CD4-positive, alpha-beta memory T cell (primary cell): ENCODE measurements at regions of chr19 and their contacts with region 1.

Region 1: DNA sequence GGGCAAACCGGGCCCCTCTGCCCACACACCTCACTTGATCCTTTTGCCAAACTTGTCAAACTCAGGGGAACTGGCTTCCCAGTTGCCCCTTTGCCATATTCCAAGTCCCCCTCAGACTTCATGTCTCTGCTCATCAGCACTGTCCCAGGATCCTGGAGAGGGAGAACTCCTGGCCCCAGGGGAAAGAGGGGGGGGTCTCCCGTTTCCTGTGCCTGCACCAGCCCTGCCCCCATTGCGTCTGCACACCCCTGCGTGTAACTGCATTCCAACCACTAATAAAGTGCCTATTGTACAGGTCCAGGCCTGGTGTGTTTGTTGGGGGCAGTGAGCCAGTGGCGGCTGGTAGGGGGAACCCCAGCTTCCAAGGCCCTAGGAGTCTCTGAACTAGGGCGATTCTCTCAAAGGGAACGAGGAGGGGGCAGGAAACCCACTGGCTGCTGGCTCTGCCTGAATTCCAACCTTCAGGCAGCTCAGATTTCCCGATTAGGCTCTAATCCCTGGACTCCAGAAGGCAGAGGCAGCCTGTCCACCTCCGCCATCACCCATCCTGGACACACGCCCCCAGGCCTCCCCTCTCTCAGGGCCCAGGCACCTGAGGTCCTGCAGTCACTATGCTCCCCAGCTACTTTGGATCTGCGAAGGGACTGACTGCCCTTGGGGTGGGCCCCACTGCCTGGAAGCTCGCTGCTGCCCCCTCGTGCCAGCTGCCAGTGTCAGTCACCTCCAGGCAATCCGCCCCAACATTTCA is 9.7 kb upstream of the ILF3 start:
- DNase-seq: peak; percentile 78 to 81 (median 80)
- H3K4me3 ChIP-seq: no peak overlapping the region
- H3K4me3 Mint-ChIP-seq: no peak overlapping the region
- H3K27ac ChIP-seq: peak overlapping the region; percentile 37
- H3K27ac Mint-ChIP-seq: peak overlapping the region; percentile 31 to 88 (median 75)
- H3K4me1 ChIP-seq: peaks cover 5% of the 10 kb centered on the region
- H3K4me1 Mint-ChIP-seq: peaks cover 7 to 28% (median 12%) of the 10 kb centered on the region in 4 donors
- H3K27me3 ChIP-seq: no peaks in the 10 kb centered on the region
- H3K27me3 Mint-ChIP-seq: no peaks in the 10 kb centered on the region

Region 2: GRCh38 chr19:10502524-10503001 is 141.9 kb before region 1 on chr19:
- CTCF ChIA-PET with region 1: interaction called, 4 read pairs
- POLR2A ChIA-PET with region 1: no interaction called
- intact Hi-C with region 1: loop called (anchors 1 kb)
- DNase-seq: peak; percentile 83 to 88 (median 87)
- H3K4me3 ChIP-seq: peak overlapping the region; percentile 50 to 97
- H3K4me3 Mint-ChIP-seq: peak overlapping the region; percentile 84 to 90 (median 88)
- H3K27ac ChIP-seq: peak overlapping the region; percentile 87
- H3K27ac Mint-ChIP-seq: peak overlapping the region; percentile 81 to 94 (median 90)
- H3K4me1 ChIP-seq: peaks cover 47% of the 10 kb centered on the region
- H3K4me1 Mint-ChIP-seq: peaks cover 21 to 49% (median 35%) of the 10 kb centered on the region in 4 donors
- H3K27me3 ChIP-seq: no peaks in the 10 kb centered on the region
- H3K27me3 Mint-ChIP-seq: no peaks in the 10 kb centered on the region

Region 3: DNA sequence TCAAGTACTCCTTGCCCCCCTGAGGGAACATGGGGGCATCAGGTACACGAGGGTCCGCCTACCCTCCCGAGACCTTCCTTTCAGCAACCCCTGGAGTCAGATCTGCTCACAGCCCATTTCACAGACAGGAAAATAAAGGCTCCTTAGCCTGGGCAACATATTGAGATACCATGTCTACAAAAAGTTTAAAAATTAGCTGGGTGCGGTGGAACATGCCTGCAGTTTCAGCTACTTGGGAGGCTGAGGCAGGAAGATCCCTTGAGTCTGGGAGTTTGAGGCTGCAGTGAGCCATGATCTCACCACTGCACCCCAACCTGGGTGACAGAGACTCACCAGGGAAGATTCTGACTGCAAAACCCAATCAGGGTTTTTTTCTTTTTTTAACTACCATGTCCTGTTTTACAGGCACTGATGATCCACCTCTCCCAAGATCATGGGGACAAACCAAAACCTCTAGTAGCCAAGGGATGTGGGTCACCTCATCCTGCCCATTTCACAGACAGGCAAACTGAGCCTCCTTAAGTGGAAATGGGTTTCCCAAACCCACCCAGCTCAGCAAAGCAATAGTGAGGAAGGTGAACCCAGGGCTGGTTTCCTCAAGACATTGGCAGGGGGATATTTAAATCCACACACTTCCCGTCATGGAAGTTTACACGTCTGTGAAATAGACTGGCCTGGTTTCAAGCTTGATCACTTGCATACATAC is 69.3 kb before region 1 on chr19:
- CTCF ChIA-PET with region 1: interaction called, 473 read pairs
- POLR2A ChIA-PET with region 1: interaction called, 46 read pairs
- intact Hi-C with region 1: no loop called
- DNase-seq: no peak
- H3K4me3 ChIP-seq: no peak overlapping the region
- H3K4me3 Mint-ChIP-seq: no peak overlapping the region
- H3K27ac ChIP-seq: no peak overlapping the region
- H3K27ac Mint-ChIP-seq: peak overlapping the region in 3 of 7 donors; percentile 13 to 70 (median 50)
- H3K4me1 ChIP-seq: peaks cover 7% of the 10 kb centered on the region
- H3K4me1 Mint-ChIP-seq: peaks cover 4 to 7% (median 7%) of the 10 kb centered on the region in 4 donors
- H3K27me3 ChIP-seq: no peaks in the 10 kb centered on the region
- H3K27me3 Mint-ChIP-seq: no peaks in the 10 kb centered on the region

Region 4: DNA sequence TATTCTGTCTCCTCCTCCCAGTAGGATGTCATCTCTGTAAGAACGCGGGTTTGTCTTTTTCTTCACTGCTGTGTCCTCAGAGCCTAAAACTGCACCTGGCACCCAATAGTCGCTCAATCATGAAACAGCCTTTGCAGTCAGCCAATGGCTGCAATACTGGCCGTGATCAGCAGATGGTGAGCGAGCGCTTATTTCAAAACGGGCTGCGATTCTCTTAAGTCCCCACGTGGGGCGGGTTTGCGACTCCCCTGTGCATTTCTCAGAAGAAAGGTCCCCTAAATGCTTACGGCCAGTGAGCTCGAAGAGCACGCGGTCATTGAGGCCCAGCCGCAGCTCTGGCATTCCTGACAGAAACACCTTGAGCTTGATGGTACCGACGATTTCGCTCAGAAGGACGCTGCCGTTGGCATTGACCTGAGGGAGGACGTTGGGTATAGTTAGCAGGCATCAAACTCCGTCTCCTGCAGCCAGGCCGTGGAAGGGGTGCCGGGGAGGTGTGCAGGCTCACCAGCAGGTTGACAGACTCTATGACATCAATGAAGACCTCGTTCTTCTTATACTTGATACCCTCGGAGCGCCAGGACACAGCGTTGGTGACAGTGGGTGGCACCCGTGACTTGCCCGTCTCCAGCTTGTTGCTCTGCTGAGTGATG is 63.3 kb before region 1 on chr19:
- CTCF ChIA-PET with region 1: interaction called, 473 read pairs
- POLR2A ChIA-PET with region 1: interaction called, 46 read pairs
- intact Hi-C with region 1: loop called (anchors 1 kb)
- DNase-seq: peak; percentile 84 to 88 (median 84)
- H3K4me3 ChIP-seq: no peak overlapping the region
- H3K4me3 Mint-ChIP-seq: peak overlapping the region in 4 of 8 donors; percentile 0 to 65 (median 30)
- H3K27ac ChIP-seq: no peak overlapping the region
- H3K27ac Mint-ChIP-seq: peak overlapping the region in 3 of 7 donors; percentile 4 to 26 (median 25)
- H3K4me1 ChIP-seq: peaks cover 22% of the 10 kb centered on the region
- H3K4me1 Mint-ChIP-seq: peaks cover 9 to 24% (median 16%) of the 10 kb centered on the region in 4 donors
- H3K27me3 ChIP-seq: no peaks in the 10 kb centered on the region
- H3K27me3 Mint-ChIP-seq: peaks cover 2% of the 10 kb centered on the region in 2 donors

Region 5: GRCh38 chr19:10602330-10603083 is 41.9 kb before region 1 on chr19:
- CTCF ChIA-PET with region 1: interaction called, 53 read pairs
- POLR2A ChIA-PET with region 1: interaction called, 51 read pairs
- intact Hi-C with region 1: loop called (anchors 1 kb)
- DNase-seq: peak; percentile 82 to 84 (median 84)
- H3K4me3 ChIP-seq: peak overlapping the region; percentile 85 to 94
- H3K4me3 Mint-ChIP-seq: peak overlapping the region; percentile 98 to 99 (median 99)
- H3K27ac ChIP-seq: peak overlapping the region; percentile 96
- H3K27ac Mint-ChIP-seq: peak overlapping the region; percentile 99 to 100 (median 100)
- H3K4me1 ChIP-seq: peaks cover 29% of the 10 kb centered on the region
- H3K4me1 Mint-ChIP-seq: peaks cover 17 to 34% (median 21%) of the 10 kb centered on the region in 4 donors
- H3K27me3 ChIP-seq: no peaks in the 10 kb centered on the region
- H3K27me3 Mint-ChIP-seq: no peaks in the 10 kb centered on the region

Region 6: GRCh38 chr19:10612491-10613119 is 31.8 kb before region 1 on chr19:
- CTCF ChIA-PET with region 1: interaction called, 11 read pairs
- POLR2A ChIA-PET with region 1: interaction called, 3 read pairs
- intact Hi-C with region 1: no loop called
- DNase-seq: no peak
- H3K4me3 ChIP-seq: no peak overlapping the region
- H3K4me3 Mint-ChIP-seq: peak overlapping the region in 1 of 8 donors; percentile 45
- H3K27ac ChIP-seq: no peak overlapping the region
- H3K27ac Mint-ChIP-seq: peak overlapping the region in 4 of 7 donors; percentile 29 to 77 (median 43)
- H3K4me1 ChIP-seq: peaks cover 35% of the 10 kb centered on the region
- H3K4me1 Mint-ChIP-seq: peaks cover 8 to 40% (median 27%) of the 10 kb centered on the region in 4 donors
- H3K27me3 ChIP-seq: no peaks in the 10 kb centered on the region
- H3K27me3 Mint-ChIP-seq: no peaks in the 10 kb centered on the region

Region 7: GRCh38 chr19:10625003-10625776 is 19.2 kb before region 1 on chr19 and contains the start of gene SLC44A2:
- CTCF ChIA-PET with region 1: interaction called, 11 read pairs
- POLR2A ChIA-PET with region 1: interaction called, 3 read pairs
- intact Hi-C with region 1: no loop called
- DNase-seq: no peak
- H3K4me3 ChIP-seq: no peak within 1 kb of the TSS
- H3K4me3 Mint-ChIP-seq: peak within 1 kb of the TSS in 7 of 8 donors; percentile 38 to 64 (median 53)
- H3K27ac ChIP-seq: no peak within 1 kb of the TSS
- H3K27ac Mint-ChIP-seq: peak within 1 kb of the TSS; percentile 50 to 80 (median 75)
- H3K4me1 ChIP-seq: peaks cover 38% of the 10 kb centered on the region
- H3K4me1 Mint-ChIP-seq: peaks cover 23 to 48% (median 31%) of the 10 kb centered on the region in 4 donors
- H3K27me3 ChIP-seq: no peaks in the 10 kb centered on the region
- H3K27me3 Mint-ChIP-seq: no peaks in the 10 kb centered on the region
- total RNA-seq, gene SLC44A2: 203 to 204 TPM